Ovary (tissue), 10 donors: ENCODE measurements at regions of chr17 and their contacts with region 1.

Region 1: GRCh38 chr17:48184721-48185120 is 77.2 kb downstream of the SNX11 start:
- DNase-seq: no peak
- H3K4me3 ChIP-seq: no peak overlapping the region
- H3K27ac ChIP-seq: no peak overlapping the region
- H3K4me1 ChIP-seq: no peaks in the 10 kb centered on the region
- H3K27me3 ChIP-seq: no peaks in the 10 kb centered on the region
- CTCF ChIP-seq: no peak
- EP300 ChIP-seq: no peak
- POLR2A ChIP-seq: no peak

Region 2: DNA sequence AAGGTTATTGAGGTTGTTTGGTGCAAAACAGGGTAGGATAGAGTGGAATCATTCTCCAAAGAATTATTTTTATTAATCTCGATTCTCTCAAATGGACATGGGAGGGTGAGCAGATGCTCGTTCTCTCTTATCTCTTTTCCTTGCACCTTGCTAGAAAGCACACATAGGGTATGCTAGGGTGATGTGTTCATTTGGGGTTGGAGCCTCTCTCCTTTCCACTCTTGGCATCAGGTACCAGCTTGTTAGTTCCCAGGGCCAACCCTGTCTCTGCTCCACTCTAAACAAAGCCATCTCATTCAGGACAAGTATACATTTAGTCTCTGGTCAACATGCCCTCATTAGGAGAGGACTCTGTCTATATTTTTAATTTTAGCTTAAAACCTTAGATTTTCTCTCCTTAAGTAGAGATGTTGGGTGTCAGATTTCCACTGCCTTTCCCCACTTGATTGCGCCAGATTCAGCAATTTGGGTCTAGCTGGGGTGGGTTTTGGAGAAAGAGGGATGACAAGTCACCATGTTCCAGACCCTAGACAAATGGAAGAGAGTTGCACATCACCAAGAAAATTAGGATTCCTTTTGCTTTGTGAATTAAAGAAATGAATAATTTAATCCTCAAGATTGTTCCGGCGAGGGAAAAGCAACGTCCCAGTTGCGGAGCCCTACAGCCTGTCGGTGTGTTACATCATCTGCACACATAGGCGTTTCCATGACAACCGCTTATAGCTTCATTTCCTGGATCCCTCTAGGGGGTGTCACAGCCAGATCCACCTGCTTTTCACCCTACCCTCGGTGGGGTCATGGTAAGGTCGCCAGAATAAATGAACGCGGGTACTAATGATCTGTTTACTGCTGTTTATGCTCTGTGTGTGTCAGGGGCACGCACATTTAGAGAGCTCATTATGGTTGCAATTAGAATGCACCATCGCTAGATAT is 35.6 kb before region 1 on chr17:
- intact Hi-C with region 1: loop called in 1 of 4 experiments (anchors 1 kb)
- DNase-seq: no peak
- H3K4me3 ChIP-seq: no peak overlapping the region
- H3K27ac ChIP-seq: no peak overlapping the region
- H3K4me1 ChIP-seq: no peaks in the 10 kb centered on the region
- H3K27me3 ChIP-seq: no peaks in the 10 kb centered on the region
- CTCF ChIP-seq: no peak
- EP300 ChIP-seq: no peak
- POLR2A ChIP-seq: no peak